ENCODE measurements at regions of chr1 and their contacts with region 1.

Region 1: GRCh38 chr1:52056163-52056936 is at the start of gene BTF3L4:
- DNase-seq: peak; percentile 98
- ATAC-seq: peak; percentile 96
- H3K4me3 Mint-ChIP-seq: peak within 1 kb of the TSS; percentile 91
- H3K27ac Mint-ChIP-seq: peak within 1 kb of the TSS; percentile 99
- H3K4me1 Mint-ChIP-seq: peaks cover 40% of the 10 kb centered on the region
- H3K27me3 Mint-ChIP-seq: no peaks in the 10 kb centered on the region
- total RNA-seq, gene BTF3L4: 33.8 to 37.8 TPM

Region 2: DNA sequence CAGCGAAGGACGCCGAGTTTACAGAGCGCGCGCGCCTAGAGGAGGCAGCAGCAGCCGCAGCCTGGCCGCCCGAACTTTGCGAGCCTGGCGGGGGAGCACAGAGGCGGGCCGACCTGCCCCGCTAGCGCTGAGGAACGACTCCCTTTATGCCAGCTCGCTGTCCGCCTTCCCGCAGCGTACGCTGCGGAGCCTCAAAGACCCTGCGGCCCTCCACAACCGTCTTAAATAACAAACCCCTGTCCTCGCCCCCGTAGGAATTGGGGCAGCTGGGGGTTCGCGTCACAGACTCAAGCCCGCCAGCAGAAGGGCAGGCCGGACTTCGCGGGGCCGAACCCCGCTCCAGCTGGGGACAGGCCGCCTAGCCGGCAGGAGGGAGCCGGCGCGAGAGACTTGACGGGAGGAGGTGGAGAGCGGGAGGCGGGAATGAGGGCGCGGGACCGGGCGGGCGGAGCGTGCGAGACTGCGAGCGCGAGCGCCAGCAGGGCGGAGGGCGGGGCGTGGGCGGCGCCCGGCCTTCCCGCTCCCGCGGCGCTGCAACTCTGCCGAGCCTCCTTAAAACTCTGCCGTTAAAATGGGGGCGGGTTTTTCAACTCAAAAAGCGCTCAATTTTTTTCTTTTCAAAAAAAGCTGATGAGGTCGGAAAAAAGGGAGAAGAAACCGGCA is 1088.1 kb before region 1 on chr1:
- CTCF ChIA-PET with region 1: no interaction called
- POLR2A ChIA-PET with region 1: no interaction called
- intact Hi-C with region 1: loop called in 1 of 2 experiments (anchors 5 kb)
- DNase-seq: peak; percentile 88
- ATAC-seq: peak; percentile 83
- H3K4me3 Mint-ChIP-seq: peak overlapping the region; percentile 93
- H3K27ac Mint-ChIP-seq: peak overlapping the region; percentile 84
- H3K4me1 Mint-ChIP-seq: peaks cover 25% of the 10 kb centered on the region
- H3K27me3 Mint-ChIP-seq: peaks cover 4% of the 10 kb centered on the region

Region 3: DNA sequence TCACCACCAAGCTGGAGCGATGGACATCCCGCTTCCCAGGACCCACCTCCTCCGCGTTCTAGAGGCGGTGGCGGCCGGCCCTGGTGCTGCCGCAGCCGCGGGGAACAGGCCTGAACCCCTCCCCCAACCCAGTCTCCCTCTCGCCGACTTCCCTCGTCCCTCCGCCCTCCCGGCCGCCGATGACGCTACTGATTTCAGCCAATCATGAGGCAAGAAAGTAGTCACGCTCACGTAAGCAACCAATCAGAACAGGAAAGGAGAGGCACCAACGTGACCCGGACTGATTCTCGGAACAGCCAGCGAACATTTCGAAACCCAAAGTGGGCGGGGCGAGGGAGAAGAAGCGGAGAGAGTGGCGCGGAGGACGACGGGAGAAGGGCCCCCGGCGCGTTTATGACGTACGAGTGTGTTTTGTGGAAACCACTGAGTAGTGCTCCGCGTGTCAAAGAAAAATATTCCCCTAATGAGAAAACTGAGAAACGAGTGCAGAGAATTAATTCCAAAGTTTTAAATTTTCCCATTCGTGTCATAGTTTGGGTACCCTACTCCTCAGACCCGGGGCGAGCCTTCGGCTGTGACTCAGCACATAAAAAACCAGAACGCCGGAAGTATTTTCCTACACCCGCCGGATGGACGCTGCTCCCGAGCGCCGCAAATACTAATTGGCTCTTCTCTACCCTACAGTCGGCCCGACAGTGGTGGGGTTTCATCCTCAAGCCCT is 177.6 kb before region 1 on chr1 and contains the start of gene NRDC:
- CTCF ChIA-PET with region 1: no interaction called
- POLR2A ChIA-PET with region 1: interaction called, 5 read pairs
- intact Hi-C with region 1: loop called in 1 of 2 experiments (anchors 1 kb)
- DNase-seq: peak; percentile 100
- ATAC-seq: peak; percentile 95
- H3K4me3 Mint-ChIP-seq: no peak within 1 kb of the TSS
- H3K27ac Mint-ChIP-seq: no peak within 1 kb of the TSS
- H3K4me1 Mint-ChIP-seq: peaks cover 27% of the 10 kb centered on the region
- H3K27me3 Mint-ChIP-seq: peaks cover 12% of the 10 kb centered on the region
- total RNA-seq, gene NRDC: 149 to 186 TPM

Region 4: DNA sequence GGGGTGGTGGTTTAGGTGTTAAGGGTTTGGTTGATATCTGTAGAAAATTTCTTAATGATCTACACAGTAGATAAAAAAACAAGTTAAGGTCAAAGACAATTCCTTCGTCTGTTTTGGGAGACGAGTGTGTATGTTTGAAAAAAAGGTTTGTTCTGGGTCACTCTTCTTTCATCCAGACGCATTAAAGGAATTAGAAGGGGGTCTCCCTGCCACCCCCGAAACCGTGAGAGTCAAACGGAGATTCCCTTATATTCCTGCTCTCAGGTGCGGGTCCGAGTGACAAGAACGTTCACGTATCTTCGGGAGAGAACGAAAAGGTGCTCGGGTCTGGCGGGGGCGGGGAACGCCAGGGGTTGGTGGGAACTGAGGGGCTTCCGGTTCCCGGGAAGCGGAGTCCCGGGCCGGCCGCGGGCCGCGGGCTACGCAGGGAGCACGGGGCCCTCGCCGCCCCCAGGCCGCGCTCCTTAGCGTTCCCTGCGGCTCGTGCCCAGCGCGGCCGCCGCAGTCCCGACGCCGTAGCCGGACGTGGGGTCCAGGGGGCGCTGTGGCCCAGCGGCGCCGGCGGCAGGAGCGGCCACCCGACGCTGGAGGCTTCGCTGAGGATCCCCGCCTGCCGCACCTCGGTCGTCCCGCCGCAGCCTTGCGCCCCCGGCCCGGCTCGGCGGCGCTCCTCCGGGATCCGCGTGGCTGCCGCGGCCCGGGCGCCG is 85.3 kb after region 1 on chr1 and contains the start of gene ZFYVE9:
- CTCF ChIA-PET with region 1: no interaction called
- POLR2A ChIA-PET with region 1: no interaction called
- intact Hi-C with region 1: loop called (anchors 1 kb)
- DNase-seq: peak; percentile 83
- ATAC-seq: peak; percentile 62
- H3K4me3 Mint-ChIP-seq: peak within 1 kb of the TSS; percentile 80
- H3K27ac Mint-ChIP-seq: peak within 1 kb of the TSS; percentile 84
- H3K4me1 Mint-ChIP-seq: peaks cover 43% of the 10 kb centered on the region
- H3K27me3 Mint-ChIP-seq: peaks cover 9% of the 10 kb centered on the region
- total RNA-seq, gene ZFYVE9: 4.3 to 4.7 TPM

Region 5: DNA sequence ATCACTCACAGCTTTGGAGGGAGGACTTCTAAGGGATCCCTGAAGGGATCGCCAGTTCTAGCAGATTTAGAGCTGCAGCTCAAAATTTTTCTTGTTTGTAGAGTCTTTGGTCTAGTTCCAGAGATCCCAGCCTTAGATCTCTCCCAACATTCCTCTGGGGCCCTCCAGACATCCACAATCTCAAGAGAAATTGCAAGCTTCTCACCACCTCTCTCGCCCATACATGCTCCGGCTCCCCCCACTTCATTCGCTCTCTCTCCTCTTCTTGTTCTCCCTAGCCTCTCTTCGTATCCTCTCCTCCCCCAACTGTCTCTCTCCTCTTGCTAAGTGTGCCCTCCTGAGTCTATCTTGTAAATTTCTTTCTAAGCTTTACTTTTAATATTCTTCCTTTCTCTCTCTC is 511.6 kb after region 1 on chr1:
- CTCF ChIA-PET with region 1: no interaction called
- POLR2A ChIA-PET with region 1: no interaction called
- intact Hi-C with region 1: no loop called
- DNase-seq: no peak
- ATAC-seq: peak; percentile 30
- H3K4me3 Mint-ChIP-seq: no peak overlapping the region
- H3K27ac Mint-ChIP-seq: no peak overlapping the region
- H3K4me1 Mint-ChIP-seq: peaks cover 15% of the 10 kb centered on the region
- H3K27me3 Mint-ChIP-seq: no peaks in the 10 kb centered on the region

Region 6: GRCh38 chr1:52920791-52921291 is 864.5 kb after region 1 on chr1:
- CTCF ChIA-PET with region 1: no interaction called
- POLR2A ChIA-PET with region 1: no interaction called
- intact Hi-C with region 1: loop called in 1 of 2 experiments (anchors 5 kb)
- DNase-seq: no peak
- ATAC-seq: no peak
- H3K4me3 Mint-ChIP-seq: peak overlapping the region; percentile 84
- H3K27ac Mint-ChIP-seq: no peak overlapping the region
- H3K4me1 Mint-ChIP-seq: peaks cover 27% of the 10 kb centered on the region
- H3K27me3 Mint-ChIP-seq: no peaks in the 10 kb centered on the region

Region 7: DNA sequence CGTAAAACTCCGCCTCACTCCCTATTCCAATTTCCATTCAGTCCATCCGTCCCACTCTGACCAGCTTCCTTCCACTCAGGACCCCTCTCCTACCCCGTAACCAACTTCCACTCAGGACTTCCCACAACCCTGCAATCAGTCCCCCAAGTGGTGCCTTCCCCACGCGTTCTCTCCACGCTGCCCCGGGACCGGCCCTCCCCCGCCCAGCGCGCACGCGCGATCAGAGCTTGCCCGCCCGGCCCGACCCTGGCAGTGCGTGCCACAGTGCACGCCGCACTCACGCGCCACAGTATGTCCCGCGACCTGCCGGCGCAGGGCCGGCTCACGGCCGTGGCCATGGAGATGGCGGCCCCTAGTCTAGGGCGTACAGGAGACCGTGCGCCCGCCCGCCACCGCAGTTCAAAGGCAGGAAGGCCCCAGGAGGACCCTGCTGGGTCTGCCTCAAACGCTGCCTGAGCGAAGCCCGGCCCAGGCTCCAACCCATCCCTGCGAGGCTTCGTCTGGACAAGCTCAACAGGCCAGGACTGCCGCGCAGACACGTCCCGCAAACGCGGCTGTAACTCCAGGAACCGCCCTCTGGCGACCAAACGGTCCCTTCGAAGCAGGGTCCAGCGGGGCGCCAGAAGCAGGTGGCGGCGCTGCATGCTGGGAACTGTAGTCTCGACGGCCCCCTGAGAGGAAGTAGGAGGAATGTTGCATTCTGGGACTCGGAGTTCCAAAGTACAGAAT is 1781.7 kb after region 1 on chr1 and contains the start of gene NDC1:
- CTCF ChIA-PET with region 1: no interaction called
- POLR2A ChIA-PET with region 1: no interaction called
- intact Hi-C with region 1: loop called in 1 of 2 experiments (anchors 2 kb)
- DNase-seq: peak; percentile 92
- ATAC-seq: peak; percentile 93
- H3K4me3 Mint-ChIP-seq: peak within 1 kb of the TSS; percentile 100
- H3K27ac Mint-ChIP-seq: peak within 1 kb of the TSS; percentile 96
- H3K4me1 Mint-ChIP-seq: peaks cover 25% of the 10 kb centered on the region
- H3K27me3 Mint-ChIP-seq: peaks cover 2% of the 10 kb centered on the region
- total RNA-seq, gene NDC1: 31.2 to 38.5 TPM